Left ventricle myocardium superior (tissue), 1 donor: ENCODE measurements at regions of chr17 and their contacts with region 1.

Region 1: DNA sequence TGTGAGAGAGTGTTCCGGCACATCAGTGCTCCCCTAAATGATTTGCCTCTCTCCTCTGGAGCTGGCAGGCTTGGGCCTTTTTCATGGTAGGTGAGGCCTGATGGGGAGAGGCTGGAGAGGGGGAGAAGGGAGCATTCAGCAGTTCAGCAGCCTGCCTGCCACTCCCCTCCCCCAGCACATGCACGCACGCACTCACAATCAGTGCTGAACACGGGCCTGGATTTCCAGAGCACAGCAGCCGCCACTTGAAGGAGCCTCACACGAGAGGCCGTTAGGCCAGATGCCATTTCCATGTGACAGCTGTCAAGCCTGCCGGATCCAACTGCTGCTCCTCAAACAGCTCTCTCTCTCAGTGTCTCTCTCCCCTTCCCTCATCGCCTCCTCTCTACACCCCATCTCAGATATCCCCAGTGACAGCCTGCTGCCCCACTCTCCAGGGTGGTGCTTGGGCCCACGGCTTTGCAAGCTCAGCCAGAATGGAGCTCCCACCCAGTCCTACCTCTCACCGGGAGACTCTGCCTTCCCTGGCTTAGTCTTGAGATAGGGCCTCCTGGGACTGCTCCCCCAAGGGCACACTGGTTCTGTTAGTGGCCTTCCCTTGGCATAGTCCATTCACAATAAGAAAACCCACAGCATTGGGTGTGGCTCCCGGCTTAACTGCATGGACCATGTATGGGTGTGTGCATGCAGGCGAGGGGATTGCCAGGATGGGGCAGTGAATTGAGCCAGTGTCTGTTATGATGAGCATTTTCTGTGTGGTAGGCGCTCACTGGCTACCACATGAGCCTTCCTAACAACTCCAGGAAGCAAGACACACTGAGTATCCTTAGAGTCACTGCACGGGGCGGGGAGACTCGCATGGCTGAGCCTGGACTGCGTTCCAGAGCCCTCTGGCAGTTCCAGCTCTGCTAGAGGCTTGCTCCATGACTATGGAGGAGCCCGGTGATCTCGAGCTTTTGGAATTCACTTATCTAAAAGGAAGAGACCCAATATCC is 226.2 kb downstream of the CCDC182 start:
- DNase-seq: peak; percentile 78
- ATAC-seq: peak; percentile 90

Region 2: DNA sequence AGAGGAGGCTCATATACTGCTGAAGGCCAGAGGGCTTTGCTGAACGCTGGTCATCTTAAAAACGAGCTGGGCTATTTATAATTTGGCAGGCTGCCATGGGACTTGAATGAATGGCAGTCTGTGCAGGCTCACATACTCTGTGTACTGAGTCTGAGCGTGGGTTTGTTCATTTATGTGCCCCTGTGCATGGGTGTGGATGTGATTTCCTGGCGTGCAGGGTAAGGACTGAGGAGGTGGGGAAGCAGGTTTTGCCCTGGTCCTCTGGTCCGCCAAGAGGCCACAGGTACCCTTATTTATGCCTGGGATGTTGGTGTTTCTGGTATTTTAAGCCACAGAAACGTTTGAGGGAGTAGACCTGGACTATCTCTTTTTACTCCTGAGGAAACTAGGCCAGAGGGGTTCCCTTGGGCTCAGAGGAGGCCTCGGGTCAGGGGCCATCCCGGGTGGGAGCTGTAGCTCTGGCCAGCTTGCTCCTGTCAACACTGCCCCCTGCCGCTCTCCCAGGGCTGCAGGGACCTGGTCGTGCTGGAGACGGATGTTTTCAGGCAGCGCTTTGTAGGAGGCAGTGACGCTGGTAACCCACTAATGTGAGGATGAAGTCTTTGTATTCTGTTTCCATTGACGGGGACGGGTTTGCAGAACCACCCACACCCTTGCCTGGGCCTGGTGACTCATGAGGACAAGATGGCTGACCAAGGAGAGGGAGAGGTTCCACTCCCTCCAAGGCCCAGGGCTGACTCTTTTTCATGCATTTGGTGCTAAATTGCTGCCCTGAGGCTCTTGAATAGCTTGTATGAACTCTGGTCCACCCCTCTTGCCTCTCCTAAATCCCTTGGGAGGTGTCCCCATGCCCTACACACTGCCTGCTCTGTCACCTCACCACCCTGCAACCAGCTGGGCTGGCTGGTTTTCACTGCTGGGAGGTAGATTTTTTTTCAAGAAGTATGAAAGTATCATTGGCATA is 78.1 kb before region 1 on chr17:
- intact Hi-C with region 1: no loop called
- DNase-seq: peak; percentile 76
- ATAC-seq: peak; percentile 81

Region 3: GRCh38 chr17:57567251-57567650 is 48.4 kb after region 1 on chr17:
- intact Hi-C with region 1: loop called (anchors 5 kb)
- DNase-seq: peak; percentile 73
- ATAC-seq: peak; percentile 7

Region 4: GRCh38 chr17:57732062-57732461 is 213.2 kb after region 1 on chr17:
- intact Hi-C with region 1: no loop called
- DNase-seq: no peak
- ATAC-seq: peak; percentile 68